OCI-LY7 (cell line): ENCODE measurements at regions of chr5 and their contacts with region 1.

Region 1: DNA sequence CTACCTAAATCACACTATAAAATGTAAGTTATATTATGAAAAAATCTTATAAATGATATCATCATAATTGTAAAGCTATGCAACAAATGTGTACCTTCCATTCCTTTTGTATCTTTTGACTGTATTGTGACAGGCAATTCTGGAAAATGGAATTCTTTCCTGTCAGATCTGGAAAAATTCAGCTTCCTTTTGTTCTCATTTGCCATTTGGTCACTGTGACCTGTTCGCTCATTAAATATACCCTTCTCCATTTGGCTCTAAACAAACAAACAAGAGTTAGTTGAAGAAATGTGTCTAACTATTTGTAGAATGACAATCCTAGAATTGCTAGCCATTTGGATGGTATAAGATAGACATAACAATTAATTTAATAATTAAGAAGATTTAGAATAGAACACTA is 62.7 kb downstream of the CDKL3 start:
- DNase-seq: no peak
- H3K4me3 ChIP-seq: no peak overlapping the region
- H3K27ac ChIP-seq: no peak overlapping the region
- H3K4me1 ChIP-seq: no peaks in the 10 kb centered on the region
- CTCF ChIP-seq: no peak

Region 2: DNA sequence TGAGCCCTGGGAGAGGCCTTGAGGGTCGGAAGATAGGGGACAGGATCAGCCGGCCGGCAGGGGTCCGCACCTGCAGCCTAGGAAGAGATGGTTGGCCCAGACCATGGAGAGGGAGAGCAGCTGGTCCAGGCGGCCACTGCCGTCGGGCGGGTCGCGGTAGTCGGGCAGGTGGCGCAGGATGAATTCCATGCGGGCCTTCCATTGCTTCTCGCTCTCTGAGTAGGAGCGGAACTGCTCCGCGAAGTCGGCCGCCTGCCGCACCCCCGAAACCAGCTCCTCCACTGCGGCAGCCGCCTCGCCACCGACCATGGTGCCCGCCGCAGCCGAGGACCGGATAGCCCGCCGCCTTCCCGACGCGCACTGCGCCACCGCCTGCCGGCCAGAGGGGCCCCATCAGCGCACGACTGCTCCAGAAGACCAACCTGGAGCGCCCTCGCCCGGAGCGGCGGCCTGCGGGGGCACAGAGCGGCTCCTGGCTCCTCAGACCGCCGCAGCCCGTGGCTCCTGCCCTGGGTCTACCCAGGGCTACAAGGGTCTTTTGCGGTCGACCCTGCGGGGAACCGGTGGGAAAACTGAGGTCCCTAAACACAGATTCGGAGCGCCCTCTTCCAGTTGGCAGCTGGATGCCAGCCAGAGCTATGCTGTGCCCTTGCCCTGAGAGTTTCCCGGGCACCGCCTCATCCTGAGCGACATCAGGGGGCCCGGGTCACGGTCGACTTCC is 107.4 kb after region 1 on chr5 and contains the start of gene CDKN2AIPNL:
- CTCF ChIA-PET with region 1: no interaction called
- POLR2A ChIA-PET with region 1: interaction called, 3 read pairs
- intact Hi-C with region 1: loop called (anchors 10 kb)
- DNase-seq: peak; percentile 91
- H3K4me3 ChIP-seq: peak within 1 kb of the TSS; percentile 100
- H3K27ac ChIP-seq: peak within 1 kb of the TSS; percentile 27
- H3K4me1 ChIP-seq: peaks cover 26% of the 10 kb centered on the region
- CTCF ChIP-seq: peak; percentile 79
- total RNA-seq, gene CDKN2AIPNL: 40.5 and 47.8 TPM in 2 replicates

Region 3: DNA sequence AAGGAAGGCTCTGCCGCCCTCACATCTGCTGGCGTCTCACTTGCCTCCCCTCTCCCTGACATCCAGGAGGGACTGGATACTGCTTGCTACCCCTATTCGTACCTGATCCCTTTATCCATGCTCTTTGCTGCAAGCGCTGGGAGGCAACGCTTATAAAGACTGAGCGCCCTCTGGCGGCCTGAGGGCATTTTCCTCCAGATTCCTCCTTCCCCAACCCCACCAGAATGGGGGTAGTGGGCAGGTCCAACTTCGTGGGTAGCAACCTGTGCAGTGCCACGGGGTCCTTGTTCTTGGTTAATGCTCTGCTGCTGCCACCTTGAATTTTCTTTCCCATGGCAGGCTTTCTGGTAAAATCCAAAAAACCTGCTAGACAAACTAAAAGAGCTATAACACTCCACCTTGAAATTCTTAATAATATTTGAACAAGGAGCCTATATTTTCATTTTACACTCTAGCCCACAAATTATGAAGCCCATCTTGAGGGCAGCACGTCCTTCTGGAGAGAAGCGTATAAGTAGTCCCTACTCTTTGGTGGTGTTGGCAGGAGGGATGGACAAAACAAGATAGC is 273.6 kb after region 1 on chr5:
- CTCF ChIA-PET with region 1: no interaction called
- POLR2A ChIA-PET with region 1: no interaction called
- intact Hi-C with region 1: loop called (anchors 2 kb)
- DNase-seq: peak; percentile 85
- H3K4me3 ChIP-seq: no peak overlapping the region
- H3K27ac ChIP-seq: no peak overlapping the region
- H3K4me1 ChIP-seq: no peaks in the 10 kb centered on the region
- CTCF ChIP-seq: peak; percentile 96